Activated B cell treated with CpG ODN at 0.5 μM for 24 hours (primary cell): ENCODE measurements at regions of chr2 and their contacts with region 1.

Region 1: DNA sequence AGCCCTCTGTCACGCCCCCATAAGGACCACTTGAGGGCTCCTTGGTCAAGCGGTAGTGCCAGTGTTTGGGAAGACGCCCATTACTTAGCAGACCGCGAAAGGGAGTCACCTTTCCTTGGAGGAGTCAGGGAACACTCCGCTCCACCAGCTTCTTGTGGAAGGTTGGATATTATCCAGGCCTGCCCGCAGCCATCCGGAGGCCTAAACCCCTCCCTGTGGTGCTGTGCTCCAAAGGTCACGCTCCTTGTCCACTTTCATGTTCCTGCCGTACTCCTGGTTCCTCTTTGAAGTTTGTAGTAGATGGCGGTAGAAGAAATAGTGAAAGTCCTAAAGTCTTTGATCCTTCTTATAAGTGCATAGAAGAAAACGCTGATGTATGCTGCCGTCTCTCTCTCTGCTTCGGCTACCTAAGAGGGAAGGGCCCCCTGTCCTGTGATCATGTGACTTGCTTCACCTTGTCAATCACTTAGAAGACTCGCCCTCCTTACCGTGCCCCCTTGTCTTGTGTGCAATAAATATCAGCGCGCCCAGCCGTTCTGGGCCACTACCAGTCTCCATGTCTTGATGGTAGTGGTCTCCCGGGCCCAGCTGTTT is 1.7 kb upstream of the CATIP start:
- DNase-seq: no peak
- ATAC-seq: no peak
- H3K4me3 Mint-ChIP-seq: no peak overlapping the region
- H3K27ac Mint-ChIP-seq: no peak overlapping the region
- H3K4me1 Mint-ChIP-seq: peaks cover 5% of the 10 kb centered on the region
- H3K27me3 Mint-ChIP-seq: no peaks in the 10 kb centered on the region
- CTCF ChIP-seq: no peak

Region 2: GRCh38 chr2:218322895-218323808 is 31.8 kb before region 1 on chr2:
- CTCF ChIA-PET with region 1: interaction called, 6 read pairs
- POLR2A ChIA-PET with region 1: interaction called, 11 read pairs
- intact Hi-C with region 1: no loop called
- DNase-seq: peak; percentile 65
- ATAC-seq: peak; percentile 74
- H3K4me3 Mint-ChIP-seq: peak overlapping the region; percentile 81
- H3K27ac Mint-ChIP-seq: peak overlapping the region; percentile 61
- H3K4me1 Mint-ChIP-seq: peaks cover 42% of the 10 kb centered on the region
- H3K27me3 Mint-ChIP-seq: peaks cover 7% of the 10 kb centered on the region
- CTCF ChIP-seq: no peak

Region 3: GRCh38 chr2:218418717-218419458 is 63.9 kb after region 1 on chr2 and contains the start of gene VIL1:
- CTCF ChIA-PET with region 1: no interaction called
- POLR2A ChIA-PET with region 1: no interaction called
- intact Hi-C with region 1: no loop called
- DNase-seq: no peak
- ATAC-seq: no peak
- H3K4me3 Mint-ChIP-seq: no peak within 1 kb of the TSS
- H3K27ac Mint-ChIP-seq: no peak within 1 kb of the TSS
- H3K4me1 Mint-ChIP-seq: no peaks in the 10 kb centered on the region
- H3K27me3 Mint-ChIP-seq: no peaks in the 10 kb centered on the region
- CTCF ChIP-seq: no peak
- total RNA-seq, gene VIL1: 0.07 TPM in 1 of 2 replicates, not detected in the other